ENCODE measurements at regions of chr9 and their contacts with region 1.

Region 1: DNA sequence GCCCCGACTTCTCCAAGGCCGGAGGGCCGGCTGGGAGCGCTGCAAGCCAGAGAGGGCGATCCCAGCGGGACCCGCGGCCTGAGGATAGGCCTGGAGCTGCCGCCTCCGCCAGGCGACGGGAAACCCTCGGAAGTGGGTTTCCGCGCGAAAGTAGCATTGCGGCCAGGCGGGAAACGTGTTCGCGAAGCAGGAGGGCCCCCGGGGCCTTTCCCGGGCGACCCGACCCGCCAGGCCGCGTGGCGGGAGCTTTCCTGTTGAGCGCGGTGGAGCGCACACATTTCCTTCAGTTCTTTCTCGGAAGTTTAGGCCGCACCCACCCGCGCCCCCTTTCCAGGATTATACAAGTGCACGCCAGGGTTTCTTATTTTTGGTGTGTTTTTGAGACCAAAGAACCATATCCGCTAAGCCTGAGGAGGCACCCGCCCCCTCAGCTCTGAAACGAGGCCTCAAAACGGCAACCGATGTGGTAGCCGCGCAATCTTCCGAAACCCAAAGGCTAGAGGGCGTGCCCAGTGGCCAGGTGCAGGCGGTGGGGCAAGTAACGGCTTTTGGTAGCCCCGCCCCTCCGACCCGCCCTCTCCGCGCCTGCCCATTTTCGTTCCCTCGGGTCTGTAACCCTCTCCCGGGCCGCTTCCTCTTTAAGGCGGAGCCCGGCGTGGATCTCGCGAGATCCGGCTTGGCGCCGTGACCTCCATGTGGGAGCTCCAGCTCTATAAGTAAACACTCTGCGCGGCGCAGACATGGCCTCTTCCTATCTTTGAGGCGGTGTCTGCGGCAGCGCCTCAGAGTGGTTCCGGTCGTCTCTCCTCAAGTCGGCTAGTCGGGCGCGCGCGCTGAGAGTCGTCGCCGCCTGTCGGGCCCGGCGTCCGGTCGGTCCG is at the start of gene UHRF2:
- DNase-seq: peak; percentile 98
- H3K4me3 ChIP-seq: peak within 1 kb of the TSS; percentile 71 to 94
- H3K27ac ChIP-seq: peak within 1 kb of the TSS; percentile 80 to 84
- H3K4me1 ChIP-seq: peaks cover 3% of the 10 kb centered on the region
- H3K27me3 ChIP-seq: no peaks in the 10 kb centered on the region
- CTCF ChIP-seq: peak in 1 of 4 experiments; percentile 2
- POLR2A ChIP-seq: peak; percentile 84
- total RNA-seq, gene UHRF2: 41.9 to 52.1 TPM

Region 2: GRCh38 chr9:5628530-5629311 is 784.0 kb before region 1 on chr9 and contains the start of gene RIC1:
- intact Hi-C with region 1: loop called (anchors 10 kb)
- DNase-seq: peak; percentile 87
- H3K4me3 ChIP-seq: peak within 1 kb of the TSS; percentile 90 to 99
- H3K27ac ChIP-seq: peak within 1 kb of the TSS; percentile 92 to 98
- H3K4me1 ChIP-seq: peaks cover 2% of the 10 kb centered on the region
- H3K27me3 ChIP-seq: no peaks in the 10 kb centered on the region
- CTCF ChIP-seq: peak in 2 of 4 experiments; percentile 38 to 46
- POLR2A ChIP-seq: peak; percentile 97
- total RNA-seq, gene RIC1: 18.0 to 49.8 TPM

Region 3: GRCh38 chr9:6488395-6488794 is 75.7 kb after region 1 on chr9:
- intact Hi-C with region 1: no loop called
- DNase-seq: no peak
- H3K4me3 ChIP-seq: no peak overlapping the region
- H3K27ac ChIP-seq: no peak overlapping the region
- H3K4me1 ChIP-seq: no peaks in the 10 kb centered on the region
- H3K27me3 ChIP-seq: no peaks in the 10 kb centered on the region
- CTCF ChIP-seq: no peak
- POLR2A ChIP-seq: no peak

Region 4: GRCh38 chr9:6681147-6681956 is 268.6 kb after region 1 on chr9:
- intact Hi-C with region 1: loop called (anchors 5 kb)
- DNase-seq: peak; percentile 93
- H3K4me3 ChIP-seq: peak overlapping the region; percentile 62 to 70
- H3K27ac ChIP-seq: peak overlapping the region; percentile 90 to 97
- H3K4me1 ChIP-seq: no peaks in the 10 kb centered on the region
- H3K27me3 ChIP-seq: no peaks in the 10 kb centered on the region
- CTCF ChIP-seq: peak in 2 of 4 experiments; percentile 11 to 45
- POLR2A ChIP-seq: peak; percentile 69

Region 5: GRCh38 chr9:6757456-6758247 is 344.9 kb after region 1 on chr9 and contains the start of gene KDM4C:
- intact Hi-C with region 1: loop called (anchors 5 kb)
- DNase-seq: peak; percentile 96
- H3K4me3 ChIP-seq: peak within 1 kb of the TSS; percentile 92 to 97
- H3K27ac ChIP-seq: peak within 1 kb of the TSS; percentile 95 to 98
- H3K4me1 ChIP-seq: no peaks in the 10 kb centered on the region
- H3K27me3 ChIP-seq: no peaks in the 10 kb centered on the region
- CTCF ChIP-seq: no peak
- POLR2A ChIP-seq: peak; percentile 91
- total RNA-seq, gene KDM4C: 18.1 to 27.7 TPM

Measured in prostate gland (tissue), 2 donors.